HepG2 (cell line): ENCODE measurements at regions of chr17 and their contacts with region 1.

Region 1: GRCh38 chr17:57995076-57995956 is 7.3 kb upstream of the VEZF1 start:
- DNase-seq: peak; percentile 87
- ATAC-seq: peak; percentile 78
- H3K4me3 ChIP-seq: no peak overlapping the region
- H3K27ac ChIP-seq: peak overlapping the region; percentile 4
- H3K4me1 ChIP-seq: peaks cover 57% of the 10 kb centered on the region
- H3K27me3 ChIP-seq: no peaks in the 10 kb centered on the region
- CTCF ChIP-seq: peak; percentile 93
- EP300 ChIP-seq: no peak
- POLR2A ChIP-seq: peak; percentile 41 to 80; a peak in 2 of 4 replicates
- RAD21 ChIP-seq: peak; percentile 89

Region 2: DNA sequence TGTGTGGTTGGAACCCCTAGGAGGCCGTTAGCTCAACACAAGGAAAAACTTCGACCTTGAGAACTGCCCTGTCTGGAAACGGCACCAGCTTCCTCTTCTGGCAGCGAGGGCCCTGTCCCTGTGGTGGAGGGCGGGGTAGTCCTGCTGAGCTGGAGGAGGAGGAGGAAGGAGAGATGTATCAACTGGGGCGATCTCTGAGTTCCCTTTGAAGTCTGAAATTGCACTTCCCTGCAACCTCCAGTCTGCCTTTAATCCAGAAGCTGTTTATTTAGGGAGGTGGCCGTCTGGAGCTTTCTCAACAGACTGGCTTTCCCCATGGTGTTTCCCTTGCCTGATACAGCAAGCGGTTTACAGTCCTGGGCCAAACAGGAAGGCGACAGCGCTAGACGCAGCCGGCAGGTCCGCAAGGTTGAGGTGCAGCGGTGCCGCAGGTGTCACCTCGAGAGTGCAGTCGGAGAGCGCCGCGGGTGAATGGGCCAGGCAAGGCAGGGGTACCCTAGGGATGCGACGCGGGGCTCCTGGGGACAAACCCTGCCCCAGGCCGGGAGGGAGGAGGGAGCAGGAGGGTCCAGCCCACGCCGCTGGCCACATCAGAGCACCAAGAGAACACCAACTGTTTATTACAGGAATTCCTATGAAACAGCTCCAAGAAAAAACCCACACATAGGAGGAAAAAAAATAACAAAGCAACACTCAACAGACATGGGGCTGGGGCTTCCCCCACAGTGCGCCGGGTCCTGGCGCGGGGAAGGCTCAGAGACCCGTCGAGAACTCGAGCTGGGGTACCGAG is 134.1 kb before region 1 on chr17:
- CTCF ChIA-PET with region 1: interaction called, 15 read pairs
- POLR2A ChIA-PET with region 1: interaction called, 173 read pairs
- in situ Hi-C with region 1: loop called (anchors 5 kb)
- intact Hi-C with region 1: loop called (anchors 1 kb)
- DNase-seq: peak; percentile 94
- ATAC-seq: peak; percentile 56
- H3K4me3 ChIP-seq: peak overlapping the region; percentile 71 to 90 (median 81)
- H3K27ac ChIP-seq: peak overlapping the region; percentile 77
- H3K4me1 ChIP-seq: peaks cover 68% of the 10 kb centered on the region
- H3K27me3 ChIP-seq: no peaks in the 10 kb centered on the region; a peak in 1 of 5 replicates
- CTCF ChIP-seq: peak; percentile 26; the same call in 1 of the 2 replicates
- EP300 ChIP-seq: peak in 1 of 2 experiments; percentile 90; a peak in 2 of 4 replicates
- POLR2A ChIP-seq: peak; percentile 46 to 72; a peak in 2 of 4 replicates
- RAD21 ChIP-seq: no peak

Region 3: GRCh38 chr17:57875309-57876115 is 119.8 kb before region 1 on chr17:
- CTCF ChIA-PET with region 1: interaction called, 3 read pairs
- POLR2A ChIA-PET with region 1: interaction called, 13 read pairs
- in situ Hi-C with region 1: no loop called
- intact Hi-C with region 1: loop called (anchors 1 kb)
- DNase-seq: peak; percentile 93
- ATAC-seq: peak; percentile 85
- H3K4me3 ChIP-seq: peak overlapping the region in 1 of 3 experiments; percentile 15; a peak in 1 of 6 replicates
- H3K27ac ChIP-seq: peak overlapping the region; percentile 64
- H3K4me1 ChIP-seq: peaks cover 68% of the 10 kb centered on the region
- H3K27me3 ChIP-seq: no peaks in the 10 kb centered on the region
- CTCF ChIP-seq: peak; percentile 62
- EP300 ChIP-seq: peak in 1 of 2 experiments; percentile 51; a peak in 1 of 4 replicates
- POLR2A ChIP-seq: no peak
- RAD21 ChIP-seq: peak; percentile 60; the same call in 1 of the 2 replicates

Region 4: GRCh38 chr17:57916925-57917858 is 78.1 kb before region 1 on chr17:
- CTCF ChIA-PET with region 1: interaction called, 5 read pairs
- POLR2A ChIA-PET with region 1: no interaction called
- in situ Hi-C with region 1: no loop called
- intact Hi-C with region 1: loop called (anchors 1 kb)
- DNase-seq: peak; percentile 53
- ATAC-seq: peak; percentile 72
- H3K4me3 ChIP-seq: no peak overlapping the region
- H3K27ac ChIP-seq: no peak overlapping the region
- H3K4me1 ChIP-seq: peaks cover 52% of the 10 kb centered on the region
- H3K27me3 ChIP-seq: no peaks in the 10 kb centered on the region
- CTCF ChIP-seq: peak; percentile 73
- EP300 ChIP-seq: no peak
- POLR2A ChIP-seq: no peak
- RAD21 ChIP-seq: peak; percentile 78

Region 5: DNA sequence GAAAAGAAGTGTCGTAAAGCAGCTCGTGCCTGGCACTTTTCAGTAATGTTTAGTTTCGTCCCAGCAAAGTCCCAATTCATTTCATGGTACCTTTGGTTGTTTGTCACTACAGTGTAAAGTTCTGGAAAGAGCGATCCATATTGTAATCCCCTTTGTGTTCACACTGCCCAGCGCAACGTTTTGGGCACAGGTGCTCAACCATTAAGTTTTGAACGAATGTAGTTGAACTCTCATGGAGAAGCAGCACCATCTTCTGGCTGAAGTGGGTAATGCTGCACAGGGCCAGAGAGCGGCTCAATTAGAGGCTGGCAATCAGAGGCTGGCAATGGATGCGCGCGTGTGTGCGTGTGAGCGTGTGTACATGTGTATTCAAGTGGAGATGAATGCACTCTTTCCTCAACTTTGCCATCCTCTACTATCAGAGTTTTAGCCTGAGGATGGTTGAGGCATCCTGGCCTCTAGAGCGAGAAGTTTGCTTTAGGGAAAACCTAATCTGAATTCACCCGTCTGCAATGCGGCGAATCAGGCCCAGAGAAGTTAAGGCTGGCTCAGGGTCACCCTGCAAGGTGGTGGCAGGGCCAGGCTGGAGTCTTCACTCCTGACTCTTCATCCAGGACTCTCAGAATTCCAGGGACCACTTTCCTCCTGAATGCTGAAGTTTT is 117.8 kb after region 1 on chr17:
- CTCF ChIA-PET with region 1: interaction called, 3 read pairs
- POLR2A ChIA-PET with region 1: no interaction called
- in situ Hi-C with region 1: no loop called
- intact Hi-C with region 1: loop called (anchors 1 kb)
- DNase-seq: peak; percentile 70
- ATAC-seq: peak; percentile 84
- H3K4me3 ChIP-seq: no peak overlapping the region
- H3K27ac ChIP-seq: no peak overlapping the region
- H3K4me1 ChIP-seq: no peaks in the 10 kb centered on the region
- H3K27me3 ChIP-seq: peaks cover 1 to 4% of the 10 kb centered on the region in 2 experiments; a peak in 3 of 5 replicates
- CTCF ChIP-seq: peak; percentile 98
- EP300 ChIP-seq: no peak
- POLR2A ChIP-seq: no peak
- RAD21 ChIP-seq: peak; percentile 93